ENCODE measurements at regions of chr20 and their contacts with region 1.

Region 1: DNA sequence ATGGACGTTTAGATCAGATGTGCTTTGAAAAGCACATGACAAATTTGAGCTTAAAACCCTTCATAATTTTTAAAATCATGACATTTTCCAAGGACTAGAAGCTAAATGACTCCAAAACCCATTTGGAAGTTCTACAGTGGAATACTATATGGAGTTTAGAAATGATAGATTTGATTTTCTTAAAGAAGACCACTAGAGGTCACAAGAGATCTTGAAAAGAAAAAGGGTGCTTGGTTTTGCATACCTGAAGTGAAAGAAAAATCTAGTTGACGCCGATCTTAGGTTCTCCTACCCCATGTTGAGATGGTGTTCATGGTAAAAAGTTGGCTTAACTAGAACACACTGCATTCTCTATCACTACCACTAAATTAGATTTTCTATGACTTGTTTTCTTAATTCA is 31.5 kb downstream of the CFAP61 start:
- DNase-seq: peak; percentile 48
- H3K4me3 ChIP-seq: no peak overlapping the region
- H3K27ac ChIP-seq: no peak overlapping the region
- H3K4me1 ChIP-seq: no peaks in the 10 kb centered on the region
- CTCF ChIP-seq: peak; percentile 83

Region 2: DNA sequence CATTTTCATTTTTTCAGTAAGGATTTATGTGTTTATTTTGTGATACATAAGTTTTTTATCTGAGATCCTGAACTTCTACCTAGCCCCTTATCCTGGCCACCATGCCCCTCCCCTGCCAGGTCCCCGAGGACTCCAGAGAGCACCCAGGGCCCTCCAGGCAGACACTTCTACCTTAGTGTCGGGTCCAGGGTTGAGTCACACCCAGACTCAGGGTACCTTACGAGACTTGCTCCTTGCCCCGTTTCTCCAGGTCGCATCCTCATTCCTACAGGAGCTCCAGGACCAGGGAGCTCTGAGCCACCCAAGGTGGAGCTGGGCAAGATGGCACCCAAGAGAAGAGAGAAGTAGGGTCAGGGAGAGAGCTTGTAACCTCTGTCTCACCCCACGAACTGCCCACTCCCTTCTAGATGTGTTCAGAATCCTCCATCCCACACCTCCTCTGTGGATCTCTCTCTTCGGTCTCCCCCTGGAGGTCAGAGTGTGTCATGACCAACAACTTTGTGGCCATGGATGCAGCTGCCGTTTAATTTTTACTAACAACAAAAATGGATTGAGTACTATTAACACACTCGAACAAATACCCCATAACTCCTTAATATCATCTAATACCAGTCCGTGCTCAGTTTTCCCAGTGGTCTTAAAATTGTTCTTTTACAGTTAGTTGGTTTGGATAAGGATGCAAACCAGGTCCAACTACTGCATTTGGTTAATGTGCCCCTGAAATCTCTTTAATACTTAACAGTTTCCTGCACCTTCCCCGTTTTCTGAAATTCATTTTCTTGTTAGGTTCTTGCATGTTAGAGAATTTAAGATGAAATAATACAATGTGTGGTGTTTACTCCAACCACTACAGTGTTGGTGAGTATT is 153.5 kb after region 1 on chr20:
- CTCF ChIA-PET with region 1: interaction called, 3 read pairs
- POLR2A ChIA-PET with region 1: no interaction called
- intact Hi-C with region 1: loop called (anchors 1 kb)
- DNase-seq: peak; percentile 41
- H3K4me3 ChIP-seq: no peak overlapping the region
- H3K27ac ChIP-seq: no peak overlapping the region
- H3K4me1 ChIP-seq: no peaks in the 10 kb centered on the region
- CTCF ChIP-seq: peak; percentile 79

Region 3: DNA sequence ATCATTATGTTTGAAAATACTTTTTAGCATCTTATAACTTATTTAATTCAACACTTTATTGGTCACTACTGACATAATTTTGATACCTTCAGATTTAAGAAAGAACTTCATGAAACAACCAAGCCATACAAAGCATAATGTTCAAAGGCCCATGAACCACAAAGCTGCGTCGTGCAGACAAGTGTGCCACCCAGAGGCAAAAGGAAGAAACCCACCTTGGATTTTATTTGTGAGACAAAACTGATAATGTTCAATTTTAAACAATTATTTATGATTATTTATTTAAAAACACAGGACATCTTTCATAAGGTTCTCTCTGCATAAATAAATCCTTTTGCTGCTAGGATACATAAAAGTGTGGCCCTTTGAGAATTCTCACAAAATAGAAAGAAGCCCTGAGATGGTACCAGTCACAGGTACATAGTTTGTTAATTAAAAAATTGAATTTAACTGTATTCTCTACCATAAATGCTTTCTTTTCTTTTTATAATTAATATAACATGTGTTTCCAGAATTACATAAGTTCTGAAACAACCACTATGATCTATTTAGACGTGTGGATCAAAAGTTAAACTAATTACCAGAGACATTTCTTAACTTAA is 484.9 kb after region 1 on chr20:
- CTCF ChIA-PET with region 1: no interaction called
- POLR2A ChIA-PET with region 1: interaction called, 5 read pairs
- intact Hi-C with region 1: loop called (anchors 1 kb)
- DNase-seq: peak; percentile 58
- H3K4me3 ChIP-seq: no peak overlapping the region
- H3K27ac ChIP-seq: no peak overlapping the region
- H3K4me1 ChIP-seq: peaks cover 8% of the 10 kb centered on the region
- CTCF ChIP-seq: peak; percentile 88

Region 4: GRCh38 chr20:20593447-20594170 is 509.8 kb after region 1 on chr20:
- CTCF ChIA-PET with region 1: no interaction called
- POLR2A ChIA-PET with region 1: no interaction called
- intact Hi-C with region 1: loop called (anchors 10 kb)
- DNase-seq: peak; percentile 37
- H3K4me3 ChIP-seq: no peak overlapping the region
- H3K27ac ChIP-seq: no peak overlapping the region
- H3K4me1 ChIP-seq: no peaks in the 10 kb centered on the region
- CTCF ChIP-seq: peak; percentile 73

Measured in OCI-LY7 (cell line).